Body of pancreas (tissue), 4 donors: ENCODE measurements at regions of chr2 and their contacts with region 1.

Region 1: GRCh38 chr2:120174963-120175581 is 48.1 kb downstream of the TMEM185B start:
- DNase-seq: peak in 3 of 4 donors; percentile 20 to 53 (median 29)
- ATAC-seq: peak; percentile 51
- H3K4me3 ChIP-seq: no peak overlapping the region
- H3K27ac ChIP-seq: no peak overlapping the region
- H3K4me1 ChIP-seq: no peaks in the 10 kb centered on the region
- H3K27me3 ChIP-seq: no peaks in the 10 kb centered on the region
- CTCF ChIP-seq: peak; percentile 63 to 75 (median 68)
- POLR2A ChIP-seq: no peak

Region 2: GRCh38 chr2:119702918-119703401 is 472.1 kb before region 1 on chr2:
- intact Hi-C with region 1: loop called (anchors 5 kb)
- DNase-seq: peak; percentile 69 to 78 (median 74)
- ATAC-seq: peak; percentile 93
- H3K4me3 ChIP-seq: no peak overlapping the region
- H3K27ac ChIP-seq: no peak overlapping the region
- H3K4me1 ChIP-seq: peaks cover 4% of the 10 kb centered on the region
- H3K27me3 ChIP-seq: no peaks in the 10 kb centered on the region
- CTCF ChIP-seq: peak; percentile 85 to 95 (median 93)
- POLR2A ChIP-seq: no peak

Region 3: GRCh38 chr2:120026890-120027289 is 148.2 kb before region 1 on chr2:
- intact Hi-C with region 1: no loop called
- DNase-seq: no peak
- ATAC-seq: no peak
- H3K4me3 ChIP-seq: no peak overlapping the region
- H3K27ac ChIP-seq: no peak overlapping the region
- H3K4me1 ChIP-seq: peaks cover 4% of the 10 kb centered on the region
- H3K27me3 ChIP-seq: no peaks in the 10 kb centered on the region
- CTCF ChIP-seq: no peak
- POLR2A ChIP-seq: no peak